Activated T-helper 1 cell treated with anti-CD3 and anti-CD28 coated beads, Interleukin-12 subunit alpha, Interleukin-12 subunit beta, Interleukin-2, Interleukin-4 antibody, amounts not matched to agents 30 ng/mL and 10 ng/mL and 1 ng/mL, durations not matched to agents 14 hours and 24 hours and 36 hours (primary cell): ENCODE measurements at regions of chr14 and their contacts with region 1.

Region 1: GRCh38 chr14:89276424-89276975 is 140.5 kb downstream of the FOXN3 start:
- DNase-seq: peak; percentile 78
- H3K4me3 Mint-ChIP-seq: peak overlapping the region; percentile 70
- H3K27ac Mint-ChIP-seq: peak overlapping the region; percentile 98
- H3K4me1 Mint-ChIP-seq: peaks cover 79% of the 10 kb centered on the region
- H3K27me3 Mint-ChIP-seq: no peaks in the 10 kb centered on the region

Region 2: DNA sequence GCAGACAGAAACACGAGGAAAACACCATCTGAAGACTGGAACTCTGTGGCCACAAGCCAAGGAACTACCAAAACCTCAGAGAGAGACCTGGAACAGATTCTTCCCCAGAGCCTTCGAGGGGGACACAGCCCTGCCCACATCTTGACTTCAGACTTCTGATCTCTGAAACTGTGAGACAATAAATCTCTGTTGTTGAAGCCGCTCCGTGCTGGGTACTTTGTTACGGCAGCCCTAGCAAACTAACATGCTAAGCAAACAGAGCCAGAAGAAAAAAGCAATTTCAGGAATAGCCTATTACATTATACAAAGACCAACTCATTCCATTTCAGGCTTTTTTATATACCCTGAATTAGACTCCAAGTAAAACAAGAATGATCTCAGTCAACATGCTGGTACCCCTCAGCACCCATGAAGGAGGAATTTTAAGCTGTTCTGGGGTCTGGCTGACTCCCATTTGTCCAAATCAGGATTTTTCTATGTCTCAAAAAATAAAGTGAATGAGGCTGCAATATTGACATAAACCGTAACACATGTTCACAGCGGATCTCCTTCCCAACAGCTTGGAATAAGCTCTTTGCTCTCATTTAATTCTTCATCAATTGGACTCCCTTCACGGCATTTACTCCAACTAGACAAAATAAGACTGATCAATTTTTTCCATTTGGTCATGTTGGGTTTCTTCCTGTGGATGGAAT is 49.6 kb before region 1 on chr14:
- intact Hi-C with region 1: loop called (anchors 5 kb)
- DNase-seq: no peak
- H3K4me3 Mint-ChIP-seq: no peak overlapping the region
- H3K27ac Mint-ChIP-seq: no peak overlapping the region
- H3K4me1 Mint-ChIP-seq: peaks cover 27% of the 10 kb centered on the region
- H3K27me3 Mint-ChIP-seq: no peaks in the 10 kb centered on the region

Region 3: DNA sequence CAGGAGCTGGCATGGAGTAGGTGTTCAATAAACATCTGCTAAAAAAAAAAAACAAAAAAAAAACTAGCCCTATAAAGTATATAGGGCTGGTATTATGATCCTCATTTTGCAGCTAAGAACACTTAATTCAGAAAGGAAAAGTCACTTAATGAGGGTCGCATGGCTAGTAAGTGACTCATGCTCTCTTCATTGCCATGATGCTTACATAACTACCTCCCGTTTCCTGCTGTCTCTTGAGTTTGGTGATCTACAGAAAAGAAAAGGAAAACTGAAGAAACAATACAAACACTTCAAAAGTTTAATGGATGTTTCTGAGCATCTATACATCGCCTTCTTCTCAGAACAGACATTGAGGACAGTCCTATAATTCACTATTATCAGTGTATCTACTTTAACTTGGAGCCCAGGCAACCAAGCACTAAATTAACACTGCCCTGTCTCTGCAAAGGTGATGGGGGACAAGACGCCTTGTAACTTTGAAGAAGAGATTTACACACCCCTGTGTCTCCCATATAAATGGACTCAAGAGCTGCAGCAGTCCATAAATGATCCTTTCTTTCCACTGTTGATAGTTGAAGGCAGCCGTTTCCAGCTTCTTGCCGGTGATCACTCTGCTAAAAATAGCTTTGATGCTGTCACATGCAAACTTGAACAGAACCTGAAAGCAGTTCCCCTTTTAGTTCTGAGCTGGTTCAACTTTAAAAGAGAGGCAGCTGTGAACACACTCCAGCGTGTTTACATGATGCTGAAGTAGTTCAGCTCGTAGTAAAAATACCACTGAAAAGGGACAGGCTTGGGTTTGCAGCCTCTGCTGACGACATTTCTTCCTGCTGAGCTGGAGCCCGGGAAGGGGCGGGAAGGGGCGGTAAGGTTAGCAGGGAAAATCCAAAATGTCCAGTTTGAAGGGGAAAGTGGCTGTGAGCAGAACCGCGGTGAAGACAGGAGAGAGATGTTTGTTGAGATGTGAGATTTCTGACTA is 27.2 kb after region 1 on chr14:
- intact Hi-C with region 1: loop called (anchors 1 kb)
- DNase-seq: peak; percentile 25
- H3K4me3 Mint-ChIP-seq: peak overlapping the region; percentile 76
- H3K27ac Mint-ChIP-seq: peak overlapping the region; percentile 87
- H3K4me1 Mint-ChIP-seq: peaks cover 57% of the 10 kb centered on the region
- H3K27me3 Mint-ChIP-seq: no peaks in the 10 kb centered on the region

Region 4: GRCh38 chr14:89324501-89325298 is 48.2 kb after region 1 on chr14:
- intact Hi-C with region 1: loop called (anchors 2 kb)
- DNase-seq: no peak
- H3K4me3 Mint-ChIP-seq: no peak overlapping the region
- H3K27ac Mint-ChIP-seq: peak overlapping the region; percentile 61
- H3K4me1 Mint-ChIP-seq: peaks cover 26% of the 10 kb centered on the region
- H3K27me3 Mint-ChIP-seq: no peaks in the 10 kb centered on the region

Region 5: DNA sequence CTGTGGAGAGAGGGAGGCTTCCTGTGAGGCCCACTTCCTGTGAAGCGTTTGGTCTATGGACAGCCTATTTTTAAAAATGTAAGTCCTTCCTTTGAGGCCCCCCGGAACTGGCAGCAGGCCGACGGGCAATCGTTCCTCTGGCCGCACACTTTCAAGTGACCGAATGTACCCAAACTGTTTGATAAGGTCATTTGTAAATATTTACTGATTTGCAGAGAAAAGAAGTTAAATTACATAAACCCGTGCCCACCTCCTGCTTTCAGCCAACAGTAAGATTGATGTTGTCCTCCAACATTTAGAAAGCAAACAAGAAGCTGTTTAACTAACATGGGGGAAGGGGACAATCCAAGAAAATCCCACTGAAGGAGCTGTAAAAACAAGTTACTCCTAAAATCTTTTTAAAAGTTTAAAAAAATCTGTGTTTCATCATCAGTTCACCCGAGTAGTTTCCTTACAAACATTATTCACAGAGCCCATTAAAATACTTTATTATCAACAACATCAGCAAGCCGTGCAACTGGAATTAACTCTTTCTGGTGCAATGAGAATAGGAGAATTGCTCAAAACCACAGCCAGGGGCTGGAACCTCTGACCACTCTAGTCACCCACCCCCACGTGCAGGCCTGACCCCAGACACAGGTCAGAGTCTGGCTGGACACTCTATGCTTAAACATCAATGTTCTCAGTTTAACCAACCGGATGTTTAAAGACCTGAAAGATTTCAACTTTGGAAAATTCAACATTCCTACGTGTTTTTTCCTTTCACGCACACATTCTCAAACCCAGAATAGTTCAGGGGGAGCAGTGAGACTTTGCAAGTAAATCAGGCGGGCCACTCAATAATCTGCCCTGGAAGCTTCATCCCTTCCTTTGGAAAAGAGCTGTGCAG is 75.3 kb after region 1 on chr14:
- intact Hi-C with region 1: loop called (anchors 5 kb)
- DNase-seq: no peak
- H3K4me3 Mint-ChIP-seq: peak overlapping the region; percentile 69
- H3K27ac Mint-ChIP-seq: peak overlapping the region; percentile 89
- H3K4me1 Mint-ChIP-seq: peaks cover 59% of the 10 kb centered on the region
- H3K27me3 Mint-ChIP-seq: no peaks in the 10 kb centered on the region

Region 6: GRCh38 chr14:89509891-89510290 is 233.4 kb after region 1 on chr14:
- intact Hi-C with region 1: loop called (anchors 2 kb)
- DNase-seq: no peak
- H3K4me3 Mint-ChIP-seq: peak overlapping the region; percentile 76
- H3K27ac Mint-ChIP-seq: peak overlapping the region; percentile 93
- H3K4me1 Mint-ChIP-seq: peaks cover 63% of the 10 kb centered on the region
- H3K27me3 Mint-ChIP-seq: no peaks in the 10 kb centered on the region